PC-3 (cell line): ENCODE measurements at regions of chr17 and their contacts with region 1.

Region 1: DNA sequence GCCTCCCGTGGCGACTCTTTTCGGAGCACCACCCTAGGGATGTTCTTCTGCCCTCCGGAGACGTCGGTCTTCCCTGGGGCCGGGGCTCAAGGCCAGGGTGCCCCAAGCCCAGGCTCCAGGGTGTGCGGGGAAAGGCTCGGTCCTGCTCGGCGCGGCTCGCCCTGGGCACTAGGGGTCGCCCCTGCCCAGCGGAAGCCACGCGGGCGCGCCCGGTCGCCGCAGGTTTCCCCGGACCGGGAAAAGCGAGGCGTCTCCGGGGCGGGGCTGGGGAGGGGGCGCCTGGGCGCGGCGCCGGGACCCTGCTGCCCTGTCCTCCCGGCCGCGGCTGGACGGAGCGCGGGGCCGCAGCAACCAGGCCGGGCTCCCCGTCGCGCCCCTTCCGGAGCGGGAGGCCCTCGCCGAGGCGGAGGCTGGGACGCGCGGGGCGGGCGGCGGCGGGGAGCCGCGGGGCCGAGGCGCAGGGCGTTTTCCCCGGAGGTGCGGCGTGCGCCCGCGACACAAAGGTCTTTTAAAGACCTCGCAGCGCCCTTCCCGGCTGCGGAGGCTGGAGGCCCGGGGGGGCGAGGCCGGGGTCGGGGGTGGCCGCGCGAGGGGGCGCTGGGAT is 76.4 kb downstream of the MRC2 start:
- DNase-seq: peak; percentile 90
- ATAC-seq: peak; percentile 78
- H3K4me3 ChIP-seq: peak overlapping the region; percentile 73
- H3K27ac ChIP-seq: peak overlapping the region; percentile 84
- H3K4me1 ChIP-seq: peaks cover 29% of the 10 kb centered on the region
- H3K27me3 ChIP-seq: no peaks in the 10 kb centered on the region
- CTCF ChIP-seq: peak; percentile 82

Region 2: GRCh38 chr17:62681061-62681939 is 22.6 kb before region 1 on chr17:
- CTCF ChIA-PET with region 1: interaction called, 10 read pairs
- POLR2A ChIA-PET with region 1: no interaction called
- intact Hi-C with region 1: no loop called
- DNase-seq: no peak
- ATAC-seq: no peak
- H3K4me3 ChIP-seq: no peak overlapping the region
- H3K27ac ChIP-seq: no peak overlapping the region
- H3K4me1 ChIP-seq: no peaks in the 10 kb centered on the region
- H3K27me3 ChIP-seq: no peaks in the 10 kb centered on the region
- CTCF ChIP-seq: no peak

Region 3: GRCh38 chr17:62778689-62779681 is 75.1 kb after region 1 on chr17:
- CTCF ChIA-PET with region 1: no interaction called
- POLR2A ChIA-PET with region 1: no interaction called
- intact Hi-C with region 1: loop called (anchors 2 kb)
- DNase-seq: peak; percentile 98
- ATAC-seq: peak; percentile 88
- H3K4me3 ChIP-seq: peak overlapping the region; percentile 39
- H3K27ac ChIP-seq: peak overlapping the region; percentile 92
- H3K4me1 ChIP-seq: peaks cover 47% of the 10 kb centered on the region
- H3K27me3 ChIP-seq: no peaks in the 10 kb centered on the region
- CTCF ChIP-seq: no peak

Region 4: DNA sequence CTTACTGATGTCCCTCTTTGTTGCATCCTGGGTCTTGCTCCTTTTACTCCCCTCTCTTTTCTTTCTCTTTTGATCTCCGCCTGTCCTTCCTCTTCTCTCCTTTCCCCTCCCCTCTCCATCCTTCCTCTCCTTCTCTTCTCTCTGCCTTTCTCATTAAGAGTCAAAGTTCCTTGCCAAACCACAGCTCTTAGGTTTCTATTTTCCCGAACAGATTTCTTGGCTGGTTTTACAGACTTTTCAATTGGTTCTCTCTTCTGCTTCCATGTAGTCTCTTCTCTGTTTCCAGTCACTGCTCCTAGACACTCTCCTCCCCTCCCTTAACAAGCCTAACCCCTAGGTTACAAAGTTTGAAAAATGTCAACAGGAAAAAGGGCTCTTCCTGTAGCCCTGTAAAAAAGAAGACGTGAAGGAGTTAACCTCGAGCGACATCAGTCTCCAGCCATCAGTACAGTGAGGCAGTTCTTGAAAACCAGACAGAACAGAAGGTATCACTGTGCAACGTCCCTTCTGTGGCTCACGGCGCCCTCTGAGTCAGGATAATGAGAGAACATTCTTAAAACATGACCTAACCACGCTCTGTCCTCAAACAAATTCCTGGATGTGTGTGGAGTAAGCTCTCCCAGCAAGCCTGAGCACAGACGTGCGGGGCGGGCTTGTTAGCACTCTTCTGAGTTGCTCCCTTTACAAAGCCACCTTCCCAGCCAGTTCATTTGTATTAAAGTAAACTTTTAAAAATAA is 115.8 kb after region 1 on chr17:
- CTCF ChIA-PET with region 1: no interaction called
- POLR2A ChIA-PET with region 1: no interaction called
- intact Hi-C with region 1: loop called (anchors 1 kb)
- DNase-seq: peak; percentile 98
- ATAC-seq: peak; percentile 95
- H3K4me3 ChIP-seq: peak overlapping the region; percentile 47
- H3K27ac ChIP-seq: peak overlapping the region; percentile 56
- H3K4me1 ChIP-seq: peaks cover 40% of the 10 kb centered on the region
- H3K27me3 ChIP-seq: no peaks in the 10 kb centered on the region
- CTCF ChIP-seq: peak; percentile 32; the same call in 1 of the 2 replicates

Region 5: GRCh38 chr17:63082273-63082993 is 378.6 kb after region 1 on chr17:
- CTCF ChIA-PET with region 1: no interaction called
- POLR2A ChIA-PET with region 1: no interaction called
- intact Hi-C with region 1: loop called (anchors 2 kb)
- DNase-seq: peak; percentile 58
- ATAC-seq: peak; percentile 28; the same call in 1 of the 2 replicates
- H3K4me3 ChIP-seq: no peak overlapping the region
- H3K27ac ChIP-seq: no peak overlapping the region
- H3K4me1 ChIP-seq: peaks cover 4% of the 10 kb centered on the region; the same call in 1 of the 2 replicates
- H3K27me3 ChIP-seq: no peaks in the 10 kb centered on the region
- CTCF ChIP-seq: peak; percentile 77